Endothelial cell of umbilical vein (primary cell): ENCODE measurements at regions of chr16 and their contacts with region 1.

Region 1: GRCh38 chr16:12927591-12927990 is 26.2 kb downstream of the SHISA9 start:
- DNase-seq: no peak
- H3K4me3 ChIP-seq: no peak overlapping the region
- H3K27ac ChIP-seq: no peak overlapping the region
- H3K4me1 ChIP-seq: no peaks in the 10 kb centered on the region
- H3K27me3 ChIP-seq: no peaks in the 10 kb centered on the region
- CTCF ChIP-seq: no peak
- POLR2A ChIP-seq: no peak

Region 2: GRCh38 chr16:12688951-12689850 is 238.4 kb before region 1 on chr16:
- CTCF ChIA-PET with region 1: no interaction called
- POLR2A ChIA-PET with region 1: interaction called, 15 read pairs
- dilution Hi-C with region 1: no loop called
- intact Hi-C with region 1: no loop called
- DNase-seq: peak; percentile 10
- H3K4me3 ChIP-seq: no peak overlapping the region
- H3K27ac ChIP-seq: no peak overlapping the region
- H3K4me1 ChIP-seq: no peaks in the 10 kb centered on the region
- H3K27me3 ChIP-seq: no peaks in the 10 kb centered on the region
- CTCF ChIP-seq: no peak
- POLR2A ChIP-seq: no peak